ENCODE measurements at regions of chr3 and their contacts with region 1.

Region 1: DNA sequence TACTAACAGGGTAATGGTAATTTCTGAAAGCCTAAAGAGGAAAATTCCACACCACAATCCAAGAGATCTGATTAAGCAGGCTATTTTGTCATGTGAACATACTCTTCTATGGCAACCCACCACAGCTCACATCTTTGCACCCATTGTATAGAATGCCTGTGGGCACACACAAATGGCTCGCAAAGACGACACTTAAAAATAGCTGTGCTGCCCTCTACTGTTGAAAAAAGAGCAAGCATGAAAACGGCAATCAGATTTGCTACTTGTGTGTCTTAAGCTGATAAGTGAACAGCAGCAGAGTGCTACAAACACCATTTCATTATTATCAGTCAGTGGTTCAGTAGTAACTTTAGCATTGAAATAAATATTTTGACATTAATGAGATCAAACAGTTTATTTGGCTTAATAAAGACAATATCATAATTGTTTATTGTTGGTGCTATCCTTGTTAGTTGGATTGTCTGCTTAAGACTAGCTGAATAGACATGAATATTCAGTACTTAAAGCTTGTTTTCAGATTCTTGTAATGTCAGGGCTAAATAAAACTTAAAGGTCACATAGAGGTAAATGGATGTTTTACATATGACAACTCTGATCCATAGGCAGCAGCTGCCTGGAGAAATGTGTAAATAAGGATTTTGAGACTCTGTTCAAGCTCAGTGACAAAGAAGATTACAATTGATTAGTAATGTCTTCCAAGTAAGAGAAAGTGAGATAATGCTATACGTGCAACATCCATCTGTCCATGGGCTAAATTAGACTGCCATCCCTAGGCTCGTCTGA is 199.1 kb downstream of the LRRN1 start:
- DNase-seq: peak; percentile 61
- H3K4me3 Mint-ChIP-seq: no peak overlapping the region
- H3K27ac Mint-ChIP-seq: no peak overlapping the region
- H3K4me1 Mint-ChIP-seq: no peaks in the 10 kb centered on the region
- H3K27me3 Mint-ChIP-seq: no peaks in the 10 kb centered on the region
- CTCF ChIP-seq: peak; percentile 67

Region 2: DNA sequence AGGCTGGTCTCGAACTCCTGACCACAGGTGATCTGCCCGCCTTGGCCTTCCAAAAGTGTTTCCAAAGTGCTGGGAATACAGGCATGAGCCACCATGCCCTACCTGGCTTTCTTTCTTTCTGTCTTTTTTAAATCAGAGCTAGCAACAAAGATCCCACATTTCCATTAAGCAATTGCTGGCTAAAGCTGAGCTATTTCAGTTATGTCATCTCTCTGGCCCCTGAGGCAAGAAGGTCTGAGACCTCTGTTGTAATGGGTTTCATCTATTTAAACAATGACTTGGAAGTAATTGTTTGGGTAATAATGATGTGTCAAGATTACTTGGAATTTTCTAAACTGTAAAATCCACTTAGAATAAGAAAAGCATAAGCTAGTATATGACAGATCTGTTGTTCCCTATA is 788.6 kb before region 1 on chr3:
- CTCF ChIA-PET with region 1: interaction called, 20 read pairs
- POLR2A ChIA-PET with region 1: no interaction called
- intact Hi-C with region 1: no loop called
- DNase-seq: peak; percentile 45
- H3K4me3 Mint-ChIP-seq: no peak overlapping the region
- H3K27ac Mint-ChIP-seq: no peak overlapping the region
- H3K4me1 Mint-ChIP-seq: no peaks in the 10 kb centered on the region
- H3K27me3 Mint-ChIP-seq: peaks cover 38% of the 10 kb centered on the region
- CTCF ChIP-seq: no peak

Region 3: DNA sequence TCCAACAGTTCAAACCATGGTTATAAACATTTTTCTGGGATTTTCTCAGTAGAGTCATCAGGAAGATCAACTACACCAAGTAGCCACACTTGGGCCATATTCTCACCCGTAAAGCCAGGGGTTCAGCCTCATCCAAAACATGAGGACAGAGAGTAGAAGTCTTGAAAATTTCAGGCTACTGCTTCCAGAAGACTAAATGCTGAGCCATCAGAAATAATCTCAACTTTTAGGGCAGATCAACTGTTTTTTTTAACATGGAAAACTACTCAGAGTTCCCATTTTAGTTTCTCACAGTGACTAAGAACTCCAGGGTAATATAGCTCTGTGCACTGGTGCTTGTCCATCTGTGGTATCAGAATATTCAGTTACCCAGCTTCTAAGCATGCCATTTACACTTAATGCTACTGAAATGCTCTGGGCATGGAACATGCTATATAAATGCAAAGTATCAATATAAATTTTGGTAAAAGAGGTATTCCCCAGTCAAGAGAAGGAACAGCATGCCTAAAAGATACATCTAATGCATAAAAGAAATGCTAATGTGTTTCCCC is 499.2 kb before region 1 on chr3:
- CTCF ChIA-PET with region 1: no interaction called
- POLR2A ChIA-PET with region 1: no interaction called
- intact Hi-C with region 1: loop called (anchors 10 kb)
- DNase-seq: no peak
- H3K4me3 Mint-ChIP-seq: no peak overlapping the region
- H3K27ac Mint-ChIP-seq: no peak overlapping the region
- H3K4me1 Mint-ChIP-seq: no peaks in the 10 kb centered on the region
- H3K27me3 Mint-ChIP-seq: peaks cover 19% of the 10 kb centered on the region
- CTCF ChIP-seq: no peak

Region 4: GRCh38 chr3:3817865-3818264 is 180.5 kb before region 1 on chr3:
- CTCF ChIA-PET with region 1: interaction called, 4 read pairs
- POLR2A ChIA-PET with region 1: no interaction called
- intact Hi-C with region 1: loop called (anchors 10 kb)
- DNase-seq: peak; percentile 83
- H3K4me3 Mint-ChIP-seq: no peak overlapping the region
- H3K27ac Mint-ChIP-seq: peak overlapping the region; percentile 80
- H3K4me1 Mint-ChIP-seq: peaks cover 24% of the 10 kb centered on the region
- H3K27me3 Mint-ChIP-seq: no peaks in the 10 kb centered on the region
- CTCF ChIP-seq: no peak

Region 5: GRCh38 chr3:3984053-3984452 is 14.3 kb before region 1 on chr3:
- CTCF ChIA-PET with region 1: interaction called, 15 read pairs
- POLR2A ChIA-PET with region 1: no interaction called
- intact Hi-C with region 1: no loop called
- DNase-seq: no peak
- H3K4me3 Mint-ChIP-seq: no peak overlapping the region
- H3K27ac Mint-ChIP-seq: no peak overlapping the region
- H3K4me1 Mint-ChIP-seq: no peaks in the 10 kb centered on the region
- H3K27me3 Mint-ChIP-seq: no peaks in the 10 kb centered on the region
- CTCF ChIP-seq: no peak

Region 6: GRCh38 chr3:4139462-4140140 is 141.3 kb after region 1 on chr3:
- CTCF ChIA-PET with region 1: no interaction called
- POLR2A ChIA-PET with region 1: no interaction called
- intact Hi-C with region 1: no loop called
- DNase-seq: no peak
- H3K4me3 Mint-ChIP-seq: no peak overlapping the region
- H3K27ac Mint-ChIP-seq: no peak overlapping the region
- H3K4me1 Mint-ChIP-seq: no peaks in the 10 kb centered on the region
- H3K27me3 Mint-ChIP-seq: no peaks in the 10 kb centered on the region
- CTCF ChIP-seq: no peak

Region 7: DNA sequence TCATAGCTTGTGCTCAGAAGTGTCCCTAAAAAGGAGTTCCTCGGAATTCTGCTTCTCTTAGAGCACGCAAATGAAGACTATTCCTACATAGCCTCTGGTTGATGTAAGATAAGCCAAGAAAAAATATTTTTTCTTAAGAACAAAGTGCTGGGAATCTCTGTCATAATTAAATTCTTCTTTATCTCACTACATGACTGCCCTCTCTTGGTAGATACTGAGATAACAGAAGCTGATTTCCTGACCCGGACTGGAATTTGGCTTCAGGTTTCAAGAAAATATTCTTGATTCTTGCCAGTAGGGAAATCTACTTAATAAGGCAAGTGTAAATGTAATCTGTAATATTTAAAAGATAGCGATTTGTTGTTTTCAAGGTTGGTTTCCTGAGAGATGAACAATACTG is 273.5 kb after region 1 on chr3:
- CTCF ChIA-PET with region 1: interaction called, 6 read pairs
- POLR2A ChIA-PET with region 1: no interaction called
- intact Hi-C with region 1: loop called (anchors 5 kb)
- DNase-seq: peak; percentile 42
- H3K4me3 Mint-ChIP-seq: no peak overlapping the region
- H3K27ac Mint-ChIP-seq: no peak overlapping the region
- H3K4me1 Mint-ChIP-seq: no peaks in the 10 kb centered on the region
- H3K27me3 Mint-ChIP-seq: peaks cover 1% of the 10 kb centered on the region
- CTCF ChIP-seq: peak; percentile 53

Region 8: GRCh38 chr3:4290272-4290893 is 292.1 kb after region 1 on chr3:
- CTCF ChIA-PET with region 1: interaction called, 9 read pairs
- POLR2A ChIA-PET with region 1: no interaction called
- intact Hi-C with region 1: loop called (anchors 5 kb)
- DNase-seq: peak; percentile 58
- H3K4me3 Mint-ChIP-seq: no peak overlapping the region
- H3K27ac Mint-ChIP-seq: no peak overlapping the region
- H3K4me1 Mint-ChIP-seq: no peaks in the 10 kb centered on the region
- H3K27me3 Mint-ChIP-seq: peaks cover 7% of the 10 kb centered on the region
- CTCF ChIP-seq: peak; percentile 77